ENCODE measurements at regions of chr17 and their contacts with region 1.

Region 1: DNA sequence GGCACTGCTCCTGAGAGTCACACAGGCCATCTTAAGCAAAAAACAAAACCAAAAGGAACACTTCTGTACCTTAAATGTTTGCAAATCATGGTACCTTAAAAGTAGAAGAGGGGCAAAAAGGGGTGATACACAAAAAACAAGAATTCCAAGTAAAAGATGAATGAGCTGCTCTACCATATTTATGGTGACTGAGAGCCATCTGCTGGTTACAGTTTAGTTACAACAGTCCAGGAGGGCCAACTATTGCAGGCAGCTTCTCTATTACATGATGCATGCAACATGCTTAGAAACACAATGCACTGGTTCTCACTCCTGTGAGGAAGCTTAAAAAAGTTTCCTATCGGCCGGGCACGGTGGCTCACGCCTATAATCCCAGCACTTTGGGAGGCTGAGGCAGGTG is 53.5 kb downstream of the STX8 start:
- DNase-seq: peak; percentile 62
- ATAC-seq: peak; percentile 87
- H3K4me3 ChIP-seq: no peak overlapping the region
- H3K27ac ChIP-seq: no peak overlapping the region
- H3K4me1 ChIP-seq: peaks cover 6% of the 10 kb centered on the region
- H3K27me3 ChIP-seq: no peaks in the 10 kb centered on the region
- CTCF ChIP-seq: peak; percentile 69
- POLR2A ChIP-seq: no peak
- RAD21 ChIP-seq: peak; percentile 79

Region 2: DNA sequence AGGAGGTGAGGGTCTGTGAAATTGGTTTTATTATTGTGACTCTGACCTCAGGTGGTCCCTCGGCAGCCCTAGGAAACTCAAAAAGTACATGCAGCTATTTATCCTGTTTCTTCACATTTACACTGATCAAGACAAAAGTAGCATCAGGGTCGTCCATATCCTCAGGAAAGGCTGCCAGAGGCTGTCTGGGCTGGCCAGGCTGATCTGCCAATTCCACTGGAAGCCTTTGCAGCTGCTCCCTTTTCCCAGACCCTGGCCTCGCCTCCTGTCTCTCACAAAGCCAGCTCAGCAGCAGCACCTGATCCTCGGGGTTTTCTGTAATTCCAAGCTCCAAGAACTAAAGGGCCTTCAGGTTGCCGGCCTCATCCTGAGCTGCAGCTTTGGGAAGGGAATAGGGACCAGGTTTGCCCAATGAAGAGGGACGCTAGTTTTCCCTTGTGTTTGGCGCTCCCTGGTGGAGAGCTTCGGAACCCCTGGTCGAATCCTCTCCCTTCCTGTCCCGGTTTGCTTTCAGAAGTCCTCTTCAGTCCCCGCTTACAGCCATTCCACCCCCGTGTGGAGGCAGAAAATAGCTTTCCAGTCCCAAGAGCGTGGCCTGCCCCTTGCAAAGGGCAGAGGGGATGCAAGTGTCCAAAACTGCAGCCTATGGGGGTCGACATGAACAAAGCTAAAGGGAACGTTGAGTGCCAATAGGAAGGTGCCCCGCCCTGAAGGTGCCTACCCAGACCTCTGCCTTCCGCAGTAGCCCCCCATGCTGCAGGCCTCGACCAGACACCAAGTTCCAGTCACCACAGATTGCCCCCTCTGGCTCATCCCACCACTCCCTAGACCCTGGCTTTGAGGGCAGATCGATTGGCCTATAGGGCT is 736.3 kb before region 1 on chr17:
- CTCF ChIA-PET with region 1: no interaction called
- POLR2A ChIA-PET with region 1: no interaction called
- dilution Hi-C with region 1: no loop called
- in situ Hi-C with region 1: loop called (anchors 25 kb)
- intact Hi-C with region 1: loop called (anchors 10 kb)
- DNase-seq: peak; percentile 56
- ATAC-seq: peak; percentile 98
- H3K4me3 ChIP-seq: no peak overlapping the region
- H3K27ac ChIP-seq: no peak overlapping the region
- H3K4me1 ChIP-seq: no peaks in the 10 kb centered on the region
- H3K27me3 ChIP-seq: no peaks in the 10 kb centered on the region; the same call in 1 of the 2 replicates
- CTCF ChIP-seq: peak; percentile 80
- POLR2A ChIP-seq: no peak
- RAD21 ChIP-seq: peak; percentile 89

Region 3: DNA sequence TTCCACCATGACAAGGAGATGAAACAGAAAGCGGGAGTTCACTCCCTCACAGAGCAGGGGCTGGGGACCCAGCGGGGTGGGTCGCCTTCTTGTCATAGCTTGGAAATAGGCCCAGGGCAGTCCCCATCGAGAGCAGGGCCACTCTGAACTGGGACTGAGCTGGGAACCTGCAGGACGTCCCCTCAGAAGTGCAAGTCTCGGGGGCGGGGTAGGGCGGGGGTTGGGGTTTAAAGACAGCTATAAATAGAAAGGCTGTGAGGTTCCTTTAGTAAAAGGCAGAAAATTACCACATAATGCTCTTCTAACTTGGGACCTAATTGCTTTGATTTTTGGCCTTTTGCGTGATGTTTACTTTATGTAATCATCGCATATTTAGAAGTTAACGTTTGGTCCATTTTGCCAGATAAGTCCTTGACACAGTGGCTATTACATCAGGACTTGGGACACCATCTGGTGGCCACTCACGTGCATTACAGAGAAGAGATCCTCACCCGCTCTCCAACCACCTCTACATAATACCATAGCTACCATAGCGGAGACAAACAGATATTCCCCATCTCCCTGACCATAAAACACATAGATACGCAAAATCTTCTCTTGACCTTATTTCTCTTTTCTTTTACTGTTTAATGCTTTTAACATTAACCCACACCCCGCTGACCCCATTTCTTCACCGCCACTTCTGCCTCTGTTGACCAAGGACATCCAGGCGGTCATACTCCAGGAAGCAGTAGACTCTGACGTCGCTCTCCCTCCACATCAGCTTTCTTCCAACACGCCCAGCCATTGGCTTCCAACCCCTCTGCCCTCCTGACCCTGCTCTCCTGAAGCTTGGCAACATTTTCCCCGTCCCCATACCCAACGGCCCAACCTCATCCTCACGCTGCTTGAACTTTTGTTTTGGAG is 627.1 kb before region 1 on chr17:
- CTCF ChIA-PET with region 1: no interaction called
- POLR2A ChIA-PET with region 1: no interaction called
- dilution Hi-C with region 1: no loop called
- in situ Hi-C with region 1: no loop called
- intact Hi-C with region 1: loop called (anchors 10 kb)
- DNase-seq: peak; percentile 59
- ATAC-seq: peak; percentile 98
- H3K4me3 ChIP-seq: no peak overlapping the region
- H3K27ac ChIP-seq: no peak overlapping the region
- H3K4me1 ChIP-seq: no peaks in the 10 kb centered on the region
- H3K27me3 ChIP-seq: no peaks in the 10 kb centered on the region; the same call in 1 of the 2 replicates
- CTCF ChIP-seq: peak; percentile 60
- POLR2A ChIP-seq: no peak
- RAD21 ChIP-seq: peak; percentile 56

Region 4: DNA sequence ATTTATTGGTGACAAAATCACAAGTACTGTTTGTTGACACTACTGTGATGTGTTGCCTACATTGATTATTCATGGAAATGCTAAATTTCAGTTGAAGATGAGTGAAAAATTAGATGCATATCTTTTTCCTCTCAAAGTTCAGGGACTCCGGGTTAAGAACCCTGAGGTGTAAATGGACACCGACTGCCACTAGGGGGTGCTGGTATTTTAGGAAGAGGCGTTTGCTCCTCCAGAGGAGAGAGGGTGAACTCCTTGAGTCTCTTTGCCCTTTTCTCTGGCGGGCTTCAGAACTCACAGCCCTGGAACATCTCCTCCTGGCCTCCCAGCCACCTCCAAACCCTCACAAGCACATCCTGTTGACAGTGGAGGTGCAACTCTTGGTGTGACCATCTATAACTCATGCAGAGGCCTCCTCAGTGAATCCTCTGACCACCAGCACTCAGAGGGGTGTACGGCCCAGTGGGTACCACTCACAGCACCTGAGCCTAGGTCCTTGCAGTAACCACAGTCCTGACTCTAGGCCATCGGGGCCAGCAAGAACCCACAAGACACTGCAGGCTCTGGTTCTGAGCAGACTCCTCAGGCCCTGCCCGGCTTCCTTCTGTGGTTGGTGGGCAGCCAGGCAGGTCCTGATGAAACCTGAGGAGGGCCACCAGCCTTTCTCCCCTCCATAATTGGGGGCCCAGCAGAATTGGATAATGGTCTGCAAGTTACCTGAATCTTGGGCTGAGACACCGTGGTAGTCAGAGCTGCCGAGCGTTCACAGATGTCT is 530.4 kb before region 1 on chr17:
- CTCF ChIA-PET with region 1: interaction called, 6 read pairs
- POLR2A ChIA-PET with region 1: no interaction called
- dilution Hi-C with region 1: no loop called
- in situ Hi-C with region 1: loop called (anchors 5 kb)
- intact Hi-C with region 1: loop called (anchors 1 kb)
- DNase-seq: peak; percentile 57
- ATAC-seq: peak; percentile 90
- H3K4me3 ChIP-seq: no peak overlapping the region
- H3K27ac ChIP-seq: no peak overlapping the region
- H3K4me1 ChIP-seq: no peaks in the 10 kb centered on the region
- H3K27me3 ChIP-seq: no peaks in the 10 kb centered on the region
- CTCF ChIP-seq: peak; percentile 70
- POLR2A ChIP-seq: no peak
- RAD21 ChIP-seq: peak; percentile 71

Region 5: DNA sequence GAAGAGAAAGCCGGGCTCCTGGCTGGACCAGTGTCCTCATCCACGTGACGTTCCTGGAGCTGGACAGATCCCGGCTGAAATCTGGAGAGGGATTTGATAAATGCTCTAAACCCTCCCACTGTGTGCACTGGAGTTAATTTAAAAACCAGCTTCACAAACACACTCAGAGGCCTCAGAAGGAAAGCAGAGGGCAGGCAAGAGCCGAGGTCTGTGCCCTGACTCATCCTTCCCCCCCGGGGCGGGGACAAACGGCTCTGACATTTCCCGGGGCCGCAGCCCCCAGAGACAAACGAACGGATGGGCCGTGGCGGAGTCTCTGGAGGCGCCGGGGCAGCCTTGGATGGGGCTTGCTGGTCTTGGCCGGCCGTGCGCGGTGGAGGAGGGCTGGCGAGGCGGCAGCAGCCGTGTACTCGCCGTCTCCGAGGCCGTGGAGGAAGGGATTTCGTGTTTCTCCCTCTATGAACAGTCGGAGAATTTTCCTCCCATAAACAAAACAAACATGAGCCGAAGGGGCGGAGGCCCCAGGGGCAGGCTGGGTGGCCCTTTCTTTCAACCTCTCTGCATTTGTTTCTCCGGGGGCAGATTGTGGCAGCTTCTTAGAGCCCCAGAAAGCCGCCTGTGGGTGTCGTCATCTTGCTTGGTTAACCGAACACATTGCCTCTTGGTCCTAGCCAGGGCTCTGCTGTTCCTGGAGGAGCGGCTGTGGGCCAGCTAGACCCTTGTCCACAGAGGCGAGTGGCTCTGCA is 406.5 kb before region 1 on chr17:
- CTCF ChIA-PET with region 1: no interaction called
- POLR2A ChIA-PET with region 1: no interaction called
- dilution Hi-C with region 1: no loop called
- in situ Hi-C with region 1: no loop called
- intact Hi-C with region 1: loop called (anchors 5 kb)
- DNase-seq: peak; percentile 6
- ATAC-seq: peak; percentile 81
- H3K4me3 ChIP-seq: no peak overlapping the region
- H3K27ac ChIP-seq: no peak overlapping the region
- H3K4me1 ChIP-seq: no peaks in the 10 kb centered on the region
- H3K27me3 ChIP-seq: no peaks in the 10 kb centered on the region
- CTCF ChIP-seq: no peak
- POLR2A ChIP-seq: no peak
- RAD21 ChIP-seq: no peak

Region 6: DNA sequence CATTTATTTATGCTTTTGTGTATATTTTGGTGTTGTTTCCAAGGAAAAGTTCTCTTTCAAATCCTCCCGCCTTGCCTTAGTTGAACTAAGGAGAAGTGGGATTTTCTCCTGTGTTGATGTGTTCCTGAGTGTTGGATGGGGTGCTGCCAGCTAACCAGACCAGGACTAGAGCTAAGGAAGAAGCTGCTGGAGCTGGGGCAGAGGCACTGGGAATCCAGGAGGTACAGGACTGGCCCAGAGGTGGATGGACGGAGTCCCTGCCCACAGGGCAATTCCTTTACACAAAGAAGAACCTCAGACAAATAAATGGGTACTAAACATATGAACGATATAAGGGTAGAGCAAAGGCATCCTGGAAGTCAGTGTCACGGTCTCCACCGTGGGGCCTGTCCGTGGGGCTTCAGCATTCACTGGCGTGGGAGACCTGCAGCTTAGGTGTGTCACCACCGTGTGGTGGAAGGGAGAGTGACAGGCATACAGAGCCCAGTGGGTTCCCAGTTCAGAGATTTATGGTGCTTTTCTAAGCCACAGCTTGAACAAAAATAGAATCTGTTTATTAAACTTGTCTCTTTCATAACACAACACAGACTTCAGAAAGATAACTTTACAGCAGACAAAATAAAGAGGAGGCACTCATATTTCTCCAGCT is 230.0 kb before region 1 on chr17:
- CTCF ChIA-PET with region 1: interaction called, 7 read pairs
- POLR2A ChIA-PET with region 1: no interaction called
- dilution Hi-C with region 1: no loop called
- in situ Hi-C with region 1: no loop called
- intact Hi-C with region 1: loop called (anchors 5 kb)
- DNase-seq: peak; percentile 25
- ATAC-seq: peak; percentile 95
- H3K4me3 ChIP-seq: no peak overlapping the region
- H3K27ac ChIP-seq: no peak overlapping the region
- H3K4me1 ChIP-seq: no peaks in the 10 kb centered on the region; the same call in 1 of the 2 replicates
- H3K27me3 ChIP-seq: no peaks in the 10 kb centered on the region
- CTCF ChIP-seq: peak; percentile 45
- POLR2A ChIP-seq: no peak
- RAD21 ChIP-seq: peak; percentile 58

Region 7: DNA sequence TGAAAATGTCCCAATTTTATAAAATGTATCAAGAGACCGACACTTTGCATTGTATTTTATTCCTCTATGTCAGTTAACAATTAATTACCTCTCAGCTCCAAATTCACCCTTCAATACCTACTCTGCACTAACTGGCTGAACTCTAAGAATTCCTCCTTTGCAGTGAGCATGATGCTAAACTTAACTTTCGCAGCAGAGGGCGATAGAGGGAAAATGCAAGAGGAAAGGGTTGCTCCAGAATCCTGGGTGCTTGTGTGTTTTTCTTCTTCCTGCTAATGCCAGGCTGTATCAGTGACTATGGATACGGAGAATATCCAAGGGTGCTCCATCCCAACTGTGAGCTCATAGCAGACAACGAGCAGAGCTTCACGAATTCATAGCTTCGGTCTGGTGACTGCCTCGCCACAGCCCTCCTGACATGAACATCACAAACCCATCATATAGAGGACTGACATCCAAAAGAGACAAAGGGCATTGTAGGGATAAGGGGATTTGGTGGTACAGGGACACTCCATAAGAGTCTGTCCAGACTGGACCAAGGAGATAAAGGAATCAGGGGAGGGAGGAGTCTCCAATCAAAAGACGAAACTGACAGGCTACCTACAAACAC is 119.4 kb before region 1 on chr17:
- CTCF ChIA-PET with region 1: no interaction called
- POLR2A ChIA-PET with region 1: no interaction called
- dilution Hi-C with region 1: loop called (anchors 25 kb)
- in situ Hi-C with region 1: no loop called
- intact Hi-C with region 1: loop called (anchors 5 kb)
- DNase-seq: peak; percentile 23
- ATAC-seq: no peak
- H3K4me3 ChIP-seq: no peak overlapping the region
- H3K27ac ChIP-seq: no peak overlapping the region
- H3K4me1 ChIP-seq: no peaks in the 10 kb centered on the region; the same call in 1 of the 2 replicates
- H3K27me3 ChIP-seq: no peaks in the 10 kb centered on the region
- CTCF ChIP-seq: peak; percentile 37; the same call in 1 of the 2 replicates
- POLR2A ChIP-seq: no peak
- RAD21 ChIP-seq: no peak; the same call in 1 of the 2 replicates

Region 8: GRCh38 chr17:9484789-9485188 is 37.3 kb before region 1 on chr17:
- CTCF ChIA-PET with region 1: no interaction called
- POLR2A ChIA-PET with region 1: no interaction called
- dilution Hi-C with region 1: no loop called
- in situ Hi-C with region 1: no loop called
- intact Hi-C with region 1: no loop called
- DNase-seq: peak; percentile 45
- ATAC-seq: peak; percentile 40
- H3K4me3 ChIP-seq: no peak overlapping the region
- H3K27ac ChIP-seq: no peak overlapping the region
- H3K4me1 ChIP-seq: no peaks in the 10 kb centered on the region
- H3K27me3 ChIP-seq: no peaks in the 10 kb centered on the region
- CTCF ChIP-seq: no peak
- POLR2A ChIP-seq: no peak
- RAD21 ChIP-seq: no peak

Region 9: DNA sequence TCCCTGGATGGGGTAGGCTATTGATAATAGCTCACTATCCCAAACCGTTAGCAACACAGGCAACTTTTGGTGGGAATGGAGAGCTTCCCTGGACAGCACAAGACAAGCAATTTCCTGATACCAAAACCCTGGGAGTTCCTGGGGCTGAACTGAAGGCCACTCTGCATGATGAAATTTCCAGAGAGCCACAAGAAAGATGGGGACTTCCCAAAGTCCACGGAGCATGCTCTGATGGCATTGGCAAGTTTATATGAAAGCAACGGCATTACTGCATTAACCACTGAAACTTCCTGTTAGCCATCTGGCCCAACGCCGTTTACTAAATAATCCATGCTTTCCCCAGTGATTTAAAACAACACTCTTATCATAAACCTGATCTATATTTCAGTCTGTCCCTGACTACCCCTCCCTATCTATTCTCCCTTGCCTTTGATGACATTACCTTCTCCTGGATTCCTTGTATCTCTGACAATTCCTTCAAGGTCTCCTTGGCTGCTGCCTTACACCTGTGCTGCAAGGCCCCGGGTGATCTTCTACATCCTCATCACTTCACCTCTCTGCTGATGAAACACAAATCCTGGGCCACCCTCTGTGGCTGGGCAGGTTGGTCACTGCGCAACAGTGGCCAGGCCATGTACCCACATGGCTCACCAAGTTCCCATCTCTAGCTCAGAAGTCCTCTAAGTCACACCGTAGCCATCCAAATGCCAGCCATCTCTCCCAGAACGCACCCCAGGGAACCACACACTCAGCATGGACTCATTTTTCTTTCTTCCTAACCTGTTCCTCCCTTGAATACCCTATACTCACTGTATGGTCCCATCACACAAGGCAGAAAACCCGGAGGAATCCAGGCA is 491.5 kb after region 1 on chr17:
- CTCF ChIA-PET with region 1: no interaction called
- POLR2A ChIA-PET with region 1: no interaction called
- dilution Hi-C with region 1: no loop called
- in situ Hi-C with region 1: no loop called
- intact Hi-C with region 1: no loop called
- DNase-seq: peak; percentile 66
- ATAC-seq: no peak; the same call in 1 of the 2 replicates
- H3K4me3 ChIP-seq: no peak overlapping the region
- H3K27ac ChIP-seq: no peak overlapping the region
- H3K4me1 ChIP-seq: peaks cover 2% of the 10 kb centered on the region; the same call in 1 of the 2 replicates
- H3K27me3 ChIP-seq: no peaks in the 10 kb centered on the region
- CTCF ChIP-seq: no peak
- POLR2A ChIP-seq: no peak
- RAD21 ChIP-seq: no peak

Measured in IMR-90 (cell line).